Esophagus muscularis mucosa (tissue), 4 donors: ENCODE measurements at regions of chr12 and their contacts with region 1.

Region 1: DNA sequence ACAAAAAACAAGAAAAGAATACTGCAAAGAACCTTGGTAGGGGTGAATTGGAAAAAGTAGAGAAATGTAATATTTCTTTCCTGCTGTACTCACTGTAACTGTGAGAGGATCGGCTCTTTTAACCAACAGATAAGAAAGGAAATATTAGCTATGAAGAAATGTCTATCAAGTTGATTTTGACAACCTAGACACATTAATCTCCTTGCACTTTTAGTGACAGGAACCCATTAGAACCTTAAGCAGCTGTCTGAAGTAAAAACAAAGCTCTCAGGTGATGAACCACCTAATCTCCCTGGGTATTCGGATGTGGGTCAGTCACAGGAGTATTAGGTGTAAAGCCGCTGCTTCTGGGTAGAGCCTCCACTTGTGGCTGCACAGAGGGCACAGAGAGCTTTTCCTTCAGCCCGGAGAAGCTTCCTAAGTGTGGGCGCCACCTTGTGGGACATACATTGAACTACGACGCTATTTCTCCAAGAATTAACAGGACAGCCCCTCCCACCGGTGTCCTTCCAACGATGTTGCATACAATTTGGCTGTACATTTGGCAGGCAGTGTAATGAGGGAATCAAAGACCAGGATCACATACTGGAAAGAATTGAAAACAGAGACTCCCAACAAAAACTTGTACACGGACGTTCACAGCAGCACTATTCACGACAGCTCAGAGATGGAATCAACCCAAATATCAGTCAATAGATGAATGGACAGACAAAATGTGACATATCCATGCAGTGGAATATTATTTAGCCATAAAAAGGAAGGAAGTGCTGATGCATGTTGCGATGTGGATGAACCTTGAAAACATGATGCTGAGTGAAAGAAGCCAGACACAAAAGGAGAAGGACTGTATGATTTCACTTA is 28.9 kb upstream of the MAPKAPK5 start:
- DNase-seq: peak; percentile 95
- H3K4me3 ChIP-seq: no peak overlapping the region
- H3K27ac ChIP-seq: peak overlapping the region in 2 of 4 donors; percentile 27 to 58
- H3K4me1 ChIP-seq: peaks cover 0 to 10% (median 4%) of the 10 kb centered on the region in 4 donors
- H3K27me3 ChIP-seq: no peaks in the 10 kb centered on the region
- CTCF ChIP-seq: peak; percentile 80 to 90 (median 82)
- EP300 ChIP-seq: no peak
- POLR2A ChIP-seq: no peak

Region 2: GRCh38 chr12:111753144-111753881 is 59.8 kb before region 1 on chr12:
- intact Hi-C with region 1: loop called (anchors 2 kb)
- DNase-seq: no peak
- H3K4me3 ChIP-seq: no peak overlapping the region
- H3K27ac ChIP-seq: no peak overlapping the region
- H3K4me1 ChIP-seq: peaks cover 24 to 36% (median 30%) of the 10 kb centered on the region in 4 donors
- H3K27me3 ChIP-seq: no peaks in the 10 kb centered on the region
- CTCF ChIP-seq: peak; percentile 79 to 87 (median 82)
- EP300 ChIP-seq: no peak
- POLR2A ChIP-seq: no peak